ENCODE measurements at regions of chr12 and their contacts with region 1.

Region 1: GRCh38 chr12:65823513-65824375 is 539 bp upstream of the HMGA2 start:
- DNase-seq: no peak
- H3K4me3 ChIP-seq: peak overlapping the region; percentile 69
- H3K27ac ChIP-seq: peak overlapping the region; percentile 91
- H3K27me3 ChIP-seq: no peaks in the 10 kb centered on the region
- CTCF ChIP-seq: no peak

Region 2: DNA sequence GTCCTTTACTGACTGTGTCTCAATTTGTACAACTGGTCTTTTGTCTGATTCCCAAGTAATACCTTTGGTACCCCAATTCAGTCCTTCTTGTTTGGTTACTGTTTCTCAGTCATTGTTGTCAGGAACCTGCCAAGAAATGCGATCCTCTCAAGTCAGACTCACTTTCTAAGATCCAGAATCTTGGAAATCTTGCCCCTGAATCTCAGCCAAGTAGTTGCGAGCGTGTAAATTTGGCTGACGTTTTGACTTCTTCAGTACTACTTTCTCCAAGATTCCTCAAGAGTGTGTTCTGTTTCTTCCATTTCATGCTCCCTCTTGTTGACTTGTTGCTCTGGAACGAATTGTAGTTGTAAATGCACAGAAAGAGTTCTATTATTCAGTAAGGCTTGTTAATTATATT is 431.3 kb before region 1 on chr12:
- CTCF ChIA-PET with region 1: no interaction called
- POLR2A ChIA-PET with region 1: interaction called, 12 read pairs
- DNase-seq: no peak
- H3K4me3 ChIP-seq: no peak overlapping the region
- H3K27ac ChIP-seq: no peak overlapping the region
- H3K27me3 ChIP-seq: no peaks in the 10 kb centered on the region
- CTCF ChIP-seq: no peak

Region 3: DNA sequence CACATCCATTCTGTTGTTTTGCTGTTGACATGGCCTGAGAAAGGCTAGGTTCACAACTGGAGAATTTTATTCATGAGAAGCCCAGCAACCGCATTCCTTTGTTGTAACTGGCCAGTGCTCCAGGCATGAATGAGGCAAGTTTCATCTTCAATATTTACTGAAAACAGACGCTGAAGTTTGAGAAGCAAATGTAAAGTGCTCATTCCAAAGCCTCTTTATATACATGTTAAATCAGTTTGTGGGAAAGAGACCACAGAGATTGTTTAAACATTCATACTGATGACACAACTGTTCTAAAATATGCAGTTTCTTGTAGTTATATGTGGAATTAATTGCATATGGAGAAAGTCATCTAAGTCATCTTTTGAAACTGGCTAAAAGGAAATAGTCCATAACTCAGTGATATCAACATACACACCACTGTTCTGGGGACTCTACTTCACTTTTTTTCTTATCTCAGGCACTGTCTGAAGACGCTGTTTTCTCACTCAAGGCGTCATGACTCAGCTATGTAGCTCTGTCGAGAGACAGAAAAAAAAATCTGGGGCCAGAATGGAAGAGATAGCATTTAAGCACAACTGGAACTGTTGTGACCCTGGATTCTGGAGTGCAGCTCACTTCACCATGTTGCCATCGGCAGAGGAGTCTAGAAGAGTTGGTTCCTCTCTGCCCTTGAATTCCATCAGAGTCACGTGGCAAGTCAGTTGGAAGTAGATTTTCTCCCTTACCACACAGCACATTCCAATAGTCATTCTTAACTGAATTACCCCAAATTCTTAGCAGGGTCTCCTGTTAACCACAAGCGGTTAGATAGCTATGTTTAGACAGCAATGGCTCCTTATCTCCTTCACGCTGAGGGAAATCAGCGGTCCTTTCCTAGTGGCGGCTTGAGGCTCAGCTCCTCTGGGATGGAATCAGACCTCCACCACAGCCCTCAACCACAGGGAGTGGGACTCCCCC is 257.9 kb before region 1 on chr12:
- CTCF ChIA-PET with region 1: no interaction called
- POLR2A ChIA-PET with region 1: interaction called, 11 read pairs
- DNase-seq: peak; percentile 96
- H3K4me3 ChIP-seq: peak overlapping the region; percentile 45
- H3K27ac ChIP-seq: peak overlapping the region; percentile 97
- H3K27me3 ChIP-seq: no peaks in the 10 kb centered on the region
- CTCF ChIP-seq: peak; percentile 32

Region 4: GRCh38 chr12:65853489-65854370 is 30.0 kb after region 1 on chr12:
- CTCF ChIA-PET with region 1: no interaction called
- POLR2A ChIA-PET with region 1: no interaction called
- DNase-seq: no peak
- H3K4me3 ChIP-seq: no peak overlapping the region
- H3K27ac ChIP-seq: peak overlapping the region; percentile 42
- H3K27me3 ChIP-seq: no peaks in the 10 kb centered on the region
- CTCF ChIP-seq: no peak

Region 5: DNA sequence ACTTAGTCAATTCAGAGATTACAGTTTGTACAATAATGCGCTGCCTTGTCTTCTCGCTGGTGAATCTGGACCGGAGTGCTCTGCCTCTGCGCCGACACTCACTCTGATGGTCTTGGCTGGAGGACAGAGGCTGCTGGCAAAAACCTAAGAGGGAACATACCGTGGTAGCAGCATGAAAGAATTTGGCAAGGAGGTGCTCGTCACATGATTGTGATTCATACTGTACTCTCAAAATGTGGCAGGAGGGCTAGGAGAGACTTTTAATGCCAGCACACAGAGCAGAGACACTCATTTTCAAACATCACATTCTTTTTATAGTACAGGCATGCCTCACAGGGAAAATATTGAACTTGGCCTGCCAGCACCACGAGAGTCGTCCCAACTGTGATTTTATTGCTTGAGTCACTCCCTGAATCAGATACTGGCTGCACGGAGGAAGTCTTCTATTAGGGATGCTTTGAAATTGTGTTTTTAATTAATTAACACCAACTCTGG is 68.3 kb after region 1 on chr12:
- CTCF ChIA-PET with region 1: no interaction called
- POLR2A ChIA-PET with region 1: no interaction called
- DNase-seq: peak; percentile 95
- H3K4me3 ChIP-seq: peak overlapping the region; percentile 37
- H3K27ac ChIP-seq: peak overlapping the region; percentile 90
- H3K27me3 ChIP-seq: no peaks in the 10 kb centered on the region
- CTCF ChIP-seq: no peak